Activated CD4-positive, alpha-beta T cell treated with anti-CD3 and anti-CD28 coated beads for 36 hours (primary cell): ENCODE measurements at regions of chr1 and their contacts with region 1.

Region 1: DNA sequence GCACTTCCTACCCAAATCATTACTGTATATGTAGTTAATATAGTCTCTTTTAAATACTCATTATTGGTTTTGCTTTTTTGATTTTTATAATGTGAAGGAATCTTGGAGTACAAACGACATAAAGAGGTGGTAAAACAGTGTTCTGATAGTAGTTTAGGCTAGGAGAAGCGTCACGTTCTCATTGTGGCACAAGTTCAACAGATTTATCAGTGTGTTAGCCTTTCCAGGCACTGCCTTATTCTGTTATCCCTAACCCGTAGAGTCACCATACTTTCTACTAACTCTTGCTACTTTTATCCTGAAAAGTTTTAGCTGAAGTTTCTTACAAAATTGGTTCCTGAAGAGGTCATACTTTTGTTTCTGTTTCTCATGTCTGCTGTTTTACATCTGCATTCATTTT is 174.6 kb upstream of the CACYBP start:
- DNase-seq: no peak
- ATAC-seq: no peak
- H3K4me3 Mint-ChIP-seq: no peak overlapping the region
- H3K27ac Mint-ChIP-seq: no peak overlapping the region
- H3K4me1 Mint-ChIP-seq: no peaks in the 10 kb centered on the region
- H3K27me3 Mint-ChIP-seq: no peaks in the 10 kb centered on the region

Region 2: DNA sequence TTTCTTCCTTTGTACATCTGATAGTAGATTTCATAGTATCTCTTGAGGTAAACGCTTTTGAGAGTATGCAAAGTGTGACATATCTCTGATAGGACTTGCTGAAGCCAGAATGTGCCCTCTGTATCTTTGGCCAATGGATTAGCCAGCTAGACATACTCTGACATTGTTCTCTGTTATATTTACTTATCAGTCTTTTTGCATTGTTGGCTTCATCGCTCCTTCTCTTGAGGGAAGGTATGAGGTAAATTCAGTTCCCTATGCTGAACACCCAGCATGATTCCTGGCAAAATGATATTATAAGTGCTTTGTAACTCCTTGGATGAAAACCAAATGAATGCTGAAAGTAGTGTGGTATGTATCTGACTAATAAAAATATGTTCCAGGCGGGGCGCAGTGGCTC is 11.4 kb after region 1 on chr1:
- CTCF ChIA-PET with region 1: no interaction called
- POLR2A ChIA-PET with region 1: no interaction called
- intact Hi-C with region 1: loop called in 1 of 2 experiments (anchors 1 kb)
- DNase-seq: no peak
- ATAC-seq: no peak
- H3K4me3 Mint-ChIP-seq: no peak overlapping the region
- H3K27ac Mint-ChIP-seq: no peak overlapping the region
- H3K4me1 Mint-ChIP-seq: peaks cover 4% of the 10 kb centered on the region
- H3K27me3 Mint-ChIP-seq: no peaks in the 10 kb centered on the region